GM12878 (cell line): ENCODE measurements at regions of chr11 and their contacts with region 1.

Region 1: GRCh38 chr11:110337570-110338193 is 41.3 kb upstream of the RDX start:
- DNase-seq: no peak
- ATAC-seq: peak; percentile 64
- H3K4me3 ChIP-seq: no peak overlapping the region
- H3K27ac ChIP-seq: peak overlapping the region; percentile 24; the same call in 1 of the 2 replicates
- H3K4me1 ChIP-seq: peaks cover 7% of the 10 kb centered on the region; the same call in 1 of the 2 replicates
- H3K27me3 ChIP-seq: no peaks in the 10 kb centered on the region
- CTCF ChIP-seq: no peak
- EP300 ChIP-seq: no peak
- POLR2A ChIP-seq: no peak
- RAD21 ChIP-seq: no peak

Region 2: GRCh38 chr11:110287537-110287936 is 50.1 kb before region 1 on chr11:
- CTCF ChIA-PET with region 1: no interaction called
- POLR2A ChIA-PET with region 1: interaction called, 6 read pairs
- RAD21 ChIA-PET with region 1: interaction called, 3 read pairs
- SMC1A ChIA-PET with region 1: interaction called, 12 read pairs
- in situ Hi-C with region 1: no loop called
- intact Hi-C with region 1: no loop called
- DNase-seq: no peak
- ATAC-seq: peak; percentile 65
- H3K4me3 ChIP-seq: no peak overlapping the region
- H3K27ac ChIP-seq: no peak overlapping the region
- H3K4me1 ChIP-seq: no peaks in the 10 kb centered on the region
- H3K27me3 ChIP-seq: no peaks in the 10 kb centered on the region
- CTCF ChIP-seq: no peak
- EP300 ChIP-seq: no peak
- POLR2A ChIP-seq: no peak
- RAD21 ChIP-seq: no peak

Region 3: GRCh38 chr11:110327508-110327907 is 10.2 kb before region 1 on chr11:
- CTCF ChIA-PET with region 1: interaction called, 3 read pairs
- POLR2A ChIA-PET with region 1: interaction called, 21 read pairs
- RAD21 ChIA-PET with region 1: interaction called, 29 read pairs
- SMC1A ChIA-PET with region 1: interaction called, 31 read pairs
- in situ Hi-C with region 1: no loop called
- intact Hi-C with region 1: no loop called
- DNase-seq: no peak
- ATAC-seq: peak; percentile 41
- H3K4me3 ChIP-seq: peak overlapping the region; percentile 64
- H3K27ac ChIP-seq: peak overlapping the region; percentile 28; the same call in 1 of the 2 replicates
- H3K4me1 ChIP-seq: peaks cover 8% of the 10 kb centered on the region; the same call in 1 of the 2 replicates
- H3K27me3 ChIP-seq: no peaks in the 10 kb centered on the region
- CTCF ChIP-seq: no peak
- EP300 ChIP-seq: no peak
- POLR2A ChIP-seq: no peak
- RAD21 ChIP-seq: no peak

Region 4: GRCh38 chr11:110704210-110704864 is 366.7 kb after region 1 on chr11:
- CTCF ChIA-PET with region 1: no interaction called
- POLR2A ChIA-PET with region 1: no interaction called
- RAD21 ChIA-PET with region 1: no interaction called
- SMC1A ChIA-PET with region 1: no interaction called
- in situ Hi-C with region 1: no loop called
- intact Hi-C with region 1: no loop called
- DNase-seq: no peak
- ATAC-seq: no peak
- H3K4me3 ChIP-seq: no peak overlapping the region
- H3K27ac ChIP-seq: no peak overlapping the region
- H3K4me1 ChIP-seq: no peaks in the 10 kb centered on the region
- H3K27me3 ChIP-seq: no peaks in the 10 kb centered on the region; a peak in 1 of 4 replicates
- CTCF ChIP-seq: no peak
- EP300 ChIP-seq: no peak
- POLR2A ChIP-seq: no peak
- RAD21 ChIP-seq: no peak